ENCODE measurements at regions of chr19 and their contacts with region 1.

Region 1: GRCh38 chr19:12796146-12797071 is 5.1 kb downstream of the JUNB start:
- DNase-seq: peak; percentile 80
- H3K4me3 ChIP-seq: no peak overlapping the region
- H3K27ac ChIP-seq: no peak overlapping the region
- H3K4me1 ChIP-seq: peaks cover 18% of the 10 kb centered on the region
- H3K27me3 ChIP-seq: no peaks in the 10 kb centered on the region
- CTCF ChIP-seq: peak; percentile 89 to 90
- POLR2A ChIP-seq: no peak

Region 2: DNA sequence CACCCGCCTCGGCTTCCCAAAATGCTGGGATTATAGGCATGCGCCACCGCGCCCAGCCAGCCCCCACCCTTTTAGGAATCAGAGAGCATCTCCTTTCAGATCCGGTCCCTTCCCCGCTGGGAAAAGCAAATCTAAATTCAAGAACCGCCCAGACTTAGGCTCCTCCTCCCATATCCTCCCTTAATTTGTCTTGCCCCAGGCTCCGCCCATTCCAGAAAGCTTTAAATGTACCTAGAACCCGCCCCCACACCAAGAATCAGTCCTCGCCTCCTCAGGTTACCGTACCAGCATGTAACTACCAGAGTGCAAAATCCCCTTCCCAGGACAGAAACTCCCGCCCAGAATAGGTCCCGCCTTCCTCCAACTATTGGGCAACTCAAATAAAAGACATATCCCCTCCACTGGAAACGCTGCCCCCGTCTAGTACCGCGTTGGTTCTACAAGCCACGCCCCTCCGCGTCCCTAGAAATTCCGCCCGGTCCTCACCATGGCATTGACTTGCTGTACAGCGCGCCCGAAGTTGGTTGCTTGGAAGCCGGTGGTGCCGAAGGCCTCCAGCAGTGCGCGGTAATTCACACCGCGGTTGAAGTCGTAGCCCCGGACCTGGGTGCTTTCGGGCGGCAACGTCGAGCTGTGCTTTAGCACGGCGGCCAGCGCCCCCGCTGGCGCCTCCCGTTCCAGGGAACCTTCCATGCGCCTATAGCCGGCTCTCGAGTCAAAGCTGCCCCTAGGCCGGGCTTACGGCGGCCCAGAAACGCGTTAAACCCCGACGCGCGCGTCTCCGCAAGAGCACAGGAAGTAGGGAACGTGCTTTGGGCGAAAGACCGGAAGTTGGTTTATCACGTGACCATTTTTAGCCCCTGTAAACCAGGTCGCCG is 115.1 kb before region 1 on chr19 and contains the start of gene DHPS:
- CTCF ChIA-PET with region 1: interaction called, 3 read pairs
- POLR2A ChIA-PET with region 1: interaction called, 3 read pairs
- dilution Hi-C with region 1: no loop called
- intact Hi-C with region 1: loop called (anchors 2 kb)
- DNase-seq: peak; percentile 95
- H3K4me3 ChIP-seq: peak within 1 kb of the TSS; percentile 15 to 77 (median 54)
- H3K27ac ChIP-seq: peak within 1 kb of the TSS; percentile 80
- H3K4me1 ChIP-seq: no peaks in the 10 kb centered on the region
- H3K27me3 ChIP-seq: no peaks in the 10 kb centered on the region
- CTCF ChIP-seq: peak in 1 of 2 donors; percentile 18
- POLR2A ChIP-seq: peak; percentile 70
- total RNA-seq, gene DHPS: 68.4 and 77.4 TPM in 2 replicates

Region 3: DNA sequence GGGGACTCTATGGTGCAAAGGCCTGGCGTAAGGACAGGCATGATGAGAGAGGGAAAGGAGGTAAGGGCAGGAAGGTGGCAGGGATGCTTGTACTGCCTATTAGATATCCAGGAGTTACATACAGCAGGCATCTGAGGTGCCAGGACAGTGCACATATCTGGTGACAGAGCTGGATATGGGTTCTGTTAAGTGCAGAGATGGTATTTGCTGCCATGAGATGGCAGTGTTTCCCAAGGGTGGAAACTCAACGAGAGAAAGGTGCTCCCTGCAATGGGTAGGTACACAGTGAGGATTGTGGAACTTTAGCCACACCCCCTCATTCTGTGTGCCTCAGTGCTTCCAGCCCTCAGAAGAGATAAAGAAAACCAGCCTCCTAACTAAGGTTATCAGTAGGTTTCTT is 79.5 kb before region 1 on chr19:
- CTCF ChIA-PET with region 1: interaction called, 5 read pairs
- POLR2A ChIA-PET with region 1: interaction called, 6 read pairs
- dilution Hi-C with region 1: no loop called
- intact Hi-C with region 1: loop called (anchors 2 kb)
- DNase-seq: peak; percentile 48
- H3K4me3 ChIP-seq: no peak overlapping the region
- H3K27ac ChIP-seq: no peak overlapping the region
- H3K4me1 ChIP-seq: peaks cover 6% of the 10 kb centered on the region
- H3K27me3 ChIP-seq: no peaks in the 10 kb centered on the region
- CTCF ChIP-seq: peak; percentile 21 to 51
- POLR2A ChIP-seq: no peak

Region 4: GRCh38 chr19:12777217-12778016 is 19.0 kb before region 1 on chr19:
- CTCF ChIA-PET with region 1: interaction called, 387 read pairs
- POLR2A ChIA-PET with region 1: interaction called, 94 read pairs
- dilution Hi-C with region 1: no loop called
- intact Hi-C with region 1: loop called (anchors 1 kb)
- DNase-seq: peak; percentile 78
- H3K4me3 ChIP-seq: peak overlapping the region; percentile 14 to 57 (median 51)
- H3K27ac ChIP-seq: peak overlapping the region; percentile 82
- H3K4me1 ChIP-seq: peaks cover 23% of the 10 kb centered on the region
- H3K27me3 ChIP-seq: no peaks in the 10 kb centered on the region
- CTCF ChIP-seq: peak; percentile 96 to 97
- POLR2A ChIP-seq: no peak

Region 5: DNA sequence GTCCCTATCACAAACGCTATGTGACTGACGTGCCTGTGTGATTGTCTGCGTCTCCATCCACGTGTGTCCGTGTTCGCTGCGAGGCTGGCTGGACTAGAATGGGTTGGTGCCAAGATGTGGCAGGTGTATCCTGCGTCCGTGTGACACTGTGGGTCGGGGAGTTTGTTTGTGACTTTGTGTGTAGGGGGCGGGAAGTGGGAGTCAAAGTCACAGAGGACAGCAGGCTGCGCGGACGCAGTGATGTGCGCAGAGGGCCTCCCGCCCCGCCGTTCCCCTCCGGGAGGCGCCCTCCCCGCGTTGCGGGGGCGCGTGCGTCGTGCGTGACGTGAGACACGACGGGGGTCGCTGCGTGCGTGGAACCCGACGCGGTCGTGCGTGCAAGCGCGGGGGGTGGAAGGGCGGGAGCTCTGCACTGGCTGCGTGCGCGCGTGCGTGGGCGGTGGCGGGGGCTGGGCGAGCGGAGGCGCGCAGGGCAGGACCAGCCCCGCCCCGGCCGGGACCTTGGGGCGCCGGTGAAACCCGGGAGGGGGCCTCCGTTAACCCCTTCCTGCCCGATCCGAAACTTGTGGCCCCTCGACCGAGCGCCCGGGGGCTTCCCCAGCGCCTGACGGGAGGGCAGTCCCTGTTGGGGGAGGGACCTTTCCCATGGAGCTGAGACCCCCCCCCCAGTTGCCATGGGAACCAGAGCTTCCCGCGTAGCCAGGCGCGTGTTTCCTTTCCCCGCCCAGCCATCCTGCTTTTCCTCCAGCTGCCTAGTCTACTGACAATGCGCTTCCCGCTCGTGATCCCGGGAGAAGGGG is 14.0 kb before region 1 on chr19:
- CTCF ChIA-PET with region 1: interaction called, 387 read pairs
- POLR2A ChIA-PET with region 1: interaction called, 94 read pairs
- dilution Hi-C with region 1: no loop called
- intact Hi-C with region 1: loop called (anchors 1 kb)
- DNase-seq: peak; percentile 96
- H3K4me3 ChIP-seq: peak overlapping the region in 2 of 3 experiments; percentile 2 to 39
- H3K27ac ChIP-seq: peak overlapping the region; percentile 50
- H3K4me1 ChIP-seq: peaks cover 25% of the 10 kb centered on the region
- H3K27me3 ChIP-seq: no peaks in the 10 kb centered on the region
- CTCF ChIP-seq: peak in 1 of 2 donors; percentile 11
- POLR2A ChIP-seq: no peak

Region 6: GRCh38 chr19:13060964-13061927 is 264.8 kb after region 1 on chr19:
- CTCF ChIA-PET with region 1: no interaction called
- POLR2A ChIA-PET with region 1: no interaction called
- dilution Hi-C with region 1: no loop called
- intact Hi-C with region 1: no loop called
- DNase-seq: peak; percentile 79
- H3K4me3 ChIP-seq: peak overlapping the region; percentile 23 to 43 (median 33)
- H3K27ac ChIP-seq: no peak overlapping the region
- H3K4me1 ChIP-seq: peaks cover 24% of the 10 kb centered on the region
- H3K27me3 ChIP-seq: no peaks in the 10 kb centered on the region
- CTCF ChIP-seq: peak; percentile 98
- POLR2A ChIP-seq: no peak

Measured in endothelial cell of umbilical vein (primary cell).